ENCODE measurements at regions of chr6 and their contacts with region 1.

Region 1: GRCh38 chr6:27893059-27893835 is 18.9 kb downstream of the OR2B2 start:
- DNase-seq: peak; percentile 86 to 95
- ATAC-seq: peak; percentile 70 to 85 (median 72)
- H3K4me3 ChIP-seq: peak overlapping the region; percentile 58
- H3K4me3 Mint-ChIP-seq: no peak overlapping the region
- H3K27ac ChIP-seq: peak overlapping the region; percentile 76
- H3K27ac Mint-ChIP-seq: no peak overlapping the region
- H3K4me1 ChIP-seq: peaks cover 48% of the 10 kb centered on the region
- H3K4me1 Mint-ChIP-seq: peaks cover 34 to 36% of the 10 kb centered on the region in 2 donors
- H3K27me3 ChIP-seq: no peaks in the 10 kb centered on the region
- H3K27me3 Mint-ChIP-seq: no peaks in the 10 kb centered on the region
- CTCF ChIP-seq: no peak

Region 2: DNA sequence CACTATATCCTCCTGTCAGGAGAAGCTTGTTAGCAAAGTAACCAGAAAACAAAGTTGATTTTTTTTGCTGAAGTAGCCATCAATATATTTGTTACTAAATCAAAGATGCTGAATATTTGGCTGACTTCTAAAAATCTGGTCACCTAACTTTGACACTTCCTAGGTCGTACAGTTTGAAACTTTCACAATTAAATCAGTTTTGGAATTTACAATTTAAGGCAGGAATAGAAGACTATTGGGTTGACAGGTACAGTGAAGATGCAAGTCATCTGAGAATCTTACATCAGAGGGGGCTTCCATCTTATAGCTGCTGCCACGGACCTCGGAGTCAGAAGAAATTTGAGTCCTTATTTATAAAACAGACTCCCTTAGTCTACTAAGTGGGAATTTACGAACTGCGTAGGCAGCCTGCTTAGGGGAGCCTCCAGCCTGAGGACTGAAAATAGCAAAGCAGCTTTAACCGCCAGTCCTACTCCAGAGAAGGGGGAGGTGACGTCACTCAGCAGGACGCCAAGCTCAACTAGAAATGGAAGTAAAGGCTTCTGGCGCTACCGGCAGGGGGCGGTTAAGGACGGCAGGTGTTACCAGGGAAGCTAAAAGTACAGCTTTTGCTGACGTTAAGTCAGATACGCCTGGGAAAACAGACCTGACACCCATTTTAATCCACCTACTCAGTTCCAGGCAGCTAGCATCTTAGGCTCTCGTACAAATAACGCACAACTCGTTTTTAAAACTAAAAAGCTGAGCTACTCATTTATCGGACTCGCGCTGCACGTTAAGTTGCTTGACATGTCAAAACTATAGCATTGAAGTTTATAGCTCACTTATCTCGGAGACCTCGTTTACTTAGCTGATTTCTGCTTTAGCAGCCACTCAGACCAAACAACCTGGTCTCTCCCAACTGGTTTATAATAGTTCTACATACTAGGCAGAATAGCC is 1867.1 kb before region 1 on chr6:
- intact Hi-C with region 1: loop called (anchors 10 kb)
- DNase-seq: peak; percentile 86 to 98
- ATAC-seq: peak; percentile 41 to 60 (median 44)
- H3K4me3 ChIP-seq: peak overlapping the region; percentile 52
- H3K4me3 Mint-ChIP-seq: peak overlapping the region; percentile 87
- H3K27ac ChIP-seq: peak overlapping the region; percentile 96
- H3K27ac Mint-ChIP-seq: peak overlapping the region; percentile 99 to 100
- H3K4me1 ChIP-seq: peaks cover 22% of the 10 kb centered on the region
- H3K4me1 Mint-ChIP-seq: peaks cover 38 to 42% of the 10 kb centered on the region in 2 donors
- H3K27me3 ChIP-seq: no peaks in the 10 kb centered on the region
- H3K27me3 Mint-ChIP-seq: peaks cover 0 to 2% of the 10 kb centered on the region in 2 donors
- CTCF ChIP-seq: peak; percentile 80

Region 3: DNA sequence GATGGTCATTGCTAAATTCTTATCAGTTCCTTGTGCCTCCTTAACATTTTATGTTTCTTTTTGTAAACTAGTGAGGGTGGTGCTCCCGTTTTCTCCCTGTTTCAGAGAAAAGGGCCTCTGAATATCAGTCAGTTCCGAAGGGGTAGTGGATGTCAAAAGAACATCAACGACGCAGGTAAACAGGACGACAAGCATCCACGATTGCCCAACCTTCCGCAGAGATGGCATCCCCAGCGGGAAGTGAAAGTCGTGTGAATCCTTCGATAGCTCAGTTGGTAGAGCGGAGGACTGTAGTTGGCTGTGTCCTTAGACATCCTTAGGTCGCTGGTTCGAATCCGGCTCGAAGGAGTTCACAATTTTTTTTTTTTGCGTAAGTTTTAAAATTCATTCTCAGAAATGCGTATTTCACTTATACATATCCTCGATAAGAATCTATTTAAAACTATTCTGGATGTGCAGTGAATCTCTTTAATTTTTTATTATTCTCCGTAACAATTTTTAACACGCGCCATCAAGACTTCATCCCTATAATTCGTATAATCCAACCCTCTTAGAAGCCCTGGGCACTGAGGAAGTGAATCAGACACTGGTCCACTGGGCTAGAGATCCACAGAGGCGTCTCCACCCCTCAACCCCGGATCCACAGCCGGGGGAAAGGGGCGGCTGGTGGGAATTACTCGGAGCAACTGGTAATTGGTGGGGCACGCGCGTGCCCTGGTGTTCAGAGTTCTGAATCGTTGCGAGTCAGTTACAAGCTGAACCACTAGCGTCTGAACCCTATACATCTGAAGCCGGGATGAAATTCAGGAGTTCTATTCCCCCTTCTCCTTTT is 1324.4 kb before region 1 on chr6:
- intact Hi-C with region 1: loop called (anchors 10 kb)
- DNase-seq: peak; percentile 99
- ATAC-seq: peak; percentile 76 to 82 (median 81)
- H3K4me3 ChIP-seq: peak overlapping the region; percentile 90
- H3K4me3 Mint-ChIP-seq: peak overlapping the region; percentile 97
- H3K27ac ChIP-seq: peak overlapping the region; percentile 66
- H3K27ac Mint-ChIP-seq: peak overlapping the region; percentile 99 to 100
- H3K4me1 ChIP-seq: peaks cover 25% of the 10 kb centered on the region
- H3K4me1 Mint-ChIP-seq: peaks cover 27 to 34% of the 10 kb centered on the region in 2 donors
- H3K27me3 ChIP-seq: no peaks in the 10 kb centered on the region
- H3K27me3 Mint-ChIP-seq: peaks cover 5 to 6% of the 10 kb centered on the region in 2 donors
- CTCF ChIP-seq: no peak

Region 4: GRCh38 chr6:27188885-27189418 is 704.3 kb before region 1 on chr6:
- intact Hi-C with region 1: loop called (anchors 1 kb)
- DNase-seq: peak; percentile 34 to 87
- ATAC-seq: peak; percentile 85 to 86 (median 86)
- H3K4me3 ChIP-seq: peak overlapping the region; percentile 56
- H3K4me3 Mint-ChIP-seq: peak overlapping the region; percentile 94
- H3K27ac ChIP-seq: peak overlapping the region; percentile 58
- H3K27ac Mint-ChIP-seq: peak overlapping the region; percentile 74 to 88
- H3K4me1 ChIP-seq: peaks cover 11% of the 10 kb centered on the region
- H3K4me1 Mint-ChIP-seq: peaks cover 18 to 21% of the 10 kb centered on the region in 2 donors
- H3K27me3 ChIP-seq: no peaks in the 10 kb centered on the region
- H3K27me3 Mint-ChIP-seq: no peaks in the 10 kb centered on the region
- CTCF ChIP-seq: peak; percentile 89

Region 5: GRCh38 chr6:27753668-27754407 is 139.4 kb before region 1 on chr6:
- intact Hi-C with region 1: loop called (anchors 5 kb)
- DNase-seq: peak; percentile 19 to 75
- ATAC-seq: no peak
- H3K4me3 ChIP-seq: peak overlapping the region; percentile 81
- H3K4me3 Mint-ChIP-seq: peak overlapping the region; percentile 99
- H3K27ac ChIP-seq: no peak overlapping the region
- H3K27ac Mint-ChIP-seq: peak overlapping the region; percentile 95 to 100
- H3K4me1 ChIP-seq: peaks cover 15% of the 10 kb centered on the region
- H3K4me1 Mint-ChIP-seq: peaks cover 32 to 37% of the 10 kb centered on the region in 2 donors
- H3K27me3 ChIP-seq: no peaks in the 10 kb centered on the region
- H3K27me3 Mint-ChIP-seq: peaks cover 2 to 9% of the 10 kb centered on the region in 2 donors
- CTCF ChIP-seq: no peak

Region 6: GRCh38 chr6:27864906-27865849 is 28.1 kb before region 1 on chr6:
- intact Hi-C with region 1: loop called (anchors 1 kb)
- DNase-seq: peak; percentile 63 to 96
- ATAC-seq: peak; percentile 76 to 89 (median 81)
- H3K4me3 ChIP-seq: peak overlapping the region; percentile 69
- H3K4me3 Mint-ChIP-seq: peak overlapping the region; percentile 90
- H3K27ac ChIP-seq: peak overlapping the region; percentile 82
- H3K27ac Mint-ChIP-seq: peak overlapping the region; percentile 92 to 94
- H3K4me1 ChIP-seq: peaks cover 35% of the 10 kb centered on the region
- H3K4me1 Mint-ChIP-seq: peaks cover 44% of the 10 kb centered on the region in 2 donors
- H3K27me3 ChIP-seq: no peaks in the 10 kb centered on the region
- H3K27me3 Mint-ChIP-seq: no peaks in the 10 kb centered on the region
- CTCF ChIP-seq: no peak

Region 7: GRCh38 chr6:28225056-28225834 is 332.0 kb after region 1 on chr6 and contains the start of gene ZSCAN9:
- intact Hi-C with region 1: no loop called
- DNase-seq: peak; percentile 57 to 64
- ATAC-seq: peak; percentile 91 to 97 (median 94)
- H3K4me3 ChIP-seq: peak within 1 kb of the TSS; percentile 64
- H3K4me3 Mint-ChIP-seq: peak within 1 kb of the TSS; percentile 80
- H3K27ac ChIP-seq: peak within 1 kb of the TSS; percentile 19
- H3K27ac Mint-ChIP-seq: peak within 1 kb of the TSS; percentile 73 to 87
- H3K4me1 ChIP-seq: peaks cover 16% of the 10 kb centered on the region
- H3K4me1 Mint-ChIP-seq: peaks cover 19 to 29% of the 10 kb centered on the region in 2 donors
- H3K27me3 ChIP-seq: peaks cover 9% of the 10 kb centered on the region
- H3K27me3 Mint-ChIP-seq: peaks cover 17 to 38% of the 10 kb centered on the region in 2 donors
- CTCF ChIP-seq: no peak
- total RNA-seq, gene ZSCAN9: 17.7 to 20.0 (median 18.7) TPM

Region 8: GRCh38 chr6:28940858-28941680 is 1047.8 kb after region 1 on chr6:
- intact Hi-C with region 1: loop called (anchors 5 kb)
- DNase-seq: peak; percentile 68 to 90
- ATAC-seq: peak; percentile 65 to 86 (median 78)
- H3K4me3 ChIP-seq: peak overlapping the region; percentile 61
- H3K4me3 Mint-ChIP-seq: peak overlapping the region; percentile 99
- H3K27ac ChIP-seq: peak overlapping the region; percentile 85
- H3K27ac Mint-ChIP-seq: peak overlapping the region; percentile 96 to 98
- H3K4me1 ChIP-seq: peaks cover 35% of the 10 kb centered on the region
- H3K4me1 Mint-ChIP-seq: peaks cover 48 to 51% of the 10 kb centered on the region in 2 donors
- H3K27me3 ChIP-seq: no peaks in the 10 kb centered on the region
- H3K27me3 Mint-ChIP-seq: peaks cover 0 to 7% of the 10 kb centered on the region in 2 donors
- CTCF ChIP-seq: no peak

Measured in natural killer cell (primary cell).